ENCODE measurements at regions of chr19 and their contacts with region 1.

Region 1: GRCh38 chr19:39996811-39997594 is at the start of gene ZNF546:
- DNase-seq: peak; percentile 70 to 97
- H3K4me3 ChIP-seq: peak within 1 kb of the TSS; percentile 69 to 72
- H3K27ac ChIP-seq: peak within 1 kb of the TSS; percentile 91 to 92
- H3K4me1 ChIP-seq: peaks cover 0 to 10% of the 10 kb centered on the region in 2 donors
- H3K27me3 ChIP-seq: no peaks in the 10 kb centered on the region
- CTCF ChIP-seq: no peak
- total RNA-seq, gene ZNF546: 3.0 TPM

Region 2: DNA sequence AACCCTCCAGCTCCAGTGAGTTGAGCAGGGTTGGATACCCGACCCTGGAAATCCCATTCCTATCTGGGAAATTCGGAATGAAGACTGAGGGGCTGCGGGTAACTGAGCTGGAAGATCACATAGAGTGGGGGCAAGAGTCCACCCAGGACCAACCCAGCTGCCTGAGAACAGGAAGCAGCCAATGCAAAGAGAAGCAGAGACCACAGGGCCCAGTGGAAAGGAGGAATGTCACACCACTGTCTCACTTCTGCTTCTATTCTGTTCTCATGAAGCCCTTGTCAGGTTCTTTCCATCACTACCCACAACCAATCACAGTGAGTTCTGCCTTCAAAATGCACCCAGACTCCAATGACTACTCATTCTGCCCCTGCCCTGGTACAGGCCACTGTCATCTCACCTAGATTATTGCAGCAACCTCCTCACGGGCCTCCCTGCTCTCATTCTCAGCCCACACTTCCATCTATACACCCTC is 178.3 kb before region 1 on chr19:
- intact Hi-C with region 1: no loop called
- DNase-seq: no peak
- H3K4me3 ChIP-seq: no peak overlapping the region
- H3K27ac ChIP-seq: no peak overlapping the region
- H3K4me1 ChIP-seq: no peaks in the 10 kb centered on the region
- H3K27me3 ChIP-seq: no peaks in the 10 kb centered on the region
- CTCF ChIP-seq: no peak

Region 3: GRCh38 chr19:39833464-39834286 is 163.3 kb before region 1 on chr19 and contains the start of gene DYRK1B:
- intact Hi-C with region 1: loop called (anchors 2 kb)
- DNase-seq: peak; percentile 91 to 99
- H3K4me3 ChIP-seq: peak within 1 kb of the TSS; percentile 75 to 99
- H3K27ac ChIP-seq: peak within 1 kb of the TSS; percentile 77 to 93
- H3K4me1 ChIP-seq: peaks cover 0 to 17% of the 10 kb centered on the region in 2 donors
- H3K27me3 ChIP-seq: no peaks in the 10 kb centered on the region
- CTCF ChIP-seq: no peak
- total RNA-seq, gene DYRK1B: 34.7 TPM

Region 4: DNA sequence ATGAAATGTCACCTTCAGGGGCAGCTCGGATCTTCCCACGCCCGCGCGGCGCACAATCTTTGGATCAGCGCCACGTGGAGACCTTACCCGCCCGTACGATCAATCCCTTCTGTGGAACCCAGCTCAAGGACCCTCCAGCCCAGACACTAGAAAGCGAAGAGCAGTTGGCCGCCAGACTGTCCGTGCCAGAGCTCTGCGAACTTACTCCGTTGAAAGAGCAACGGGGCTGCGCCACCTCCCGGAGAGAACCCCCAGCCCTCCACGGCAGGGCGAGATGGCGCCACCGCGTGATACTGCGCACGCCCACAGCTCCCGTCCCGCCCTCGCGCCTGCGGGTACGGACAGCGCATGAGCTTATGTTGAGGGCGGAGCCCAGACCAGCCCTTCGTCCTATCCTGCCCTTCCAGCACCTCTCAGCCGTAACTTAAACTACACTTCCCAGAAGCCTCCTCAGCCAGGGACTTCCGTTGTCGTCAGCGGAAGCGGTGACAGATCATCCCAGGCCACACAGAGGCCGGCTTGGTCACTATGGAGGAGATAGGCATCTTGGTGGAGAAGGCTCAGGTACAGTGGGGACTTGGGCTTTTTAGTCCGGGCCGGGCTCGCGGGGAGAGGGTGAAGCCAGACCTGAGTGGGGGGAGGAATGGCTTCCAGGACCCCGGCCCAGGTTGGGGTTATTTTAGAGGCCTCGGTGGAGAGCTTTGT is 26.2 kb before region 1 on chr19 and contains the start of gene PSMC4:
- intact Hi-C with region 1: loop called (anchors 1 kb)
- DNase-seq: peak; percentile 95 to 99
- H3K4me3 ChIP-seq: peak within 1 kb of the TSS; percentile 75 to 76
- H3K27ac ChIP-seq: peak within 1 kb of the TSS; percentile 86 to 90
- H3K4me1 ChIP-seq: peaks cover 0 to 14% of the 10 kb centered on the region in 2 donors
- H3K27me3 ChIP-seq: no peaks in the 10 kb centered on the region
- CTCF ChIP-seq: peak; percentile 66 to 78 (median 75)
- total RNA-seq, gene PSMC4: 122 TPM

Region 5: GRCh38 chr19:39983695-39984305 is 13.2 kb before region 1 on chr19:
- intact Hi-C with region 1: no loop called
- DNase-seq: no peak
- H3K4me3 ChIP-seq: no peak overlapping the region
- H3K27ac ChIP-seq: no peak overlapping the region
- H3K4me1 ChIP-seq: peaks cover 0 to under 1% of the 10 kb centered on the region in 2 donors
- H3K27me3 ChIP-seq: no peaks in the 10 kb centered on the region
- CTCF ChIP-seq: no peak

Region 6: DNA sequence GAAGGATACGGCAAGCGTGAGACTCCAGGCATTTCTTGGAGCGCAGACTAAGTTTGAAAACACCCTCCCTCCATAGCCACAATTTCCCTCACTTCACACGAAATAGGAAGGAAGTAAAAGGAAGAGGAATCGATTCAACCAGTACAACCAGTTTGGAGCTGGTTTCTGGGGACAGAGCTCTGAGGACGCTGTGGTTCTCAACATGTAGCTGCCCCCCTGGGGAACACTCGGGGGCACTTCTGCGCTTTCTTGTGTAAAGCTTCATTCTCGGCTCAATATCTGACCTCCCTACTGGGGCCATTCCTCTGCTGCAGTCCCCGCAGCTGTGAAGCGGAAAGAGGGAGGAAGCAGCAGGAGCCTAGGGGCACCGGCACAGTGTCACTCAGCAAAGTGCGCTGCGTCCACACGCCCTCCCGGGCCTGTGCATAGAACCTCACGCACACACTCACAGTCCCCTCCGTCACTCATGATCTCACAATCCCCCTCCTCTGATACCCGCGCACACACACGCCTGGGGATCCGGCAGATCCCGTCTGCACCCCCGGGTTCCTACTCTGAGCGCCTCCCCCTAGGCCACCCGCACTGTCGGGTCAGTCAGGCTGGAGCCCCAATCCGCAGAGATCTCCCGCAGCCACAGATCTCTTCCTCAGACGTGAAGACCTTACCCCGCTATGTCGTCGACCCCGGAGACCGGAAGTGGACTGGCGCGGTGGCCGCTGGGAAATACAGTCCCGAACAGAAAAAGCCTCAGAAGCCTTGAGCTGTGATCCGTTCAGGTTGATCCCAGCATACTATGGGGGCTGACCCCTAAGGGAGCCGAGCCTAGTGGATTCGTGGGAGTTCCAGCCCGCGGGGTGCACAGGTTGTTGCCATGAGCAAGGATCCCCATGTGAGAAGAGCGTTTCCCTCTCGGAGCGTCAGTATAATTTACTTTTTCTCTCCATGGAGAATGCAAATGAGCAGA is 93.5 kb after region 1 on chr19 and contains the start of gene ZNF780A:
- intact Hi-C with region 1: loop called (anchors 5 kb)
- DNase-seq: peak in 1 of 2 donors; percentile 83
- H3K4me3 ChIP-seq: peak within 1 kb of the TSS; percentile 78 to 90
- H3K27ac ChIP-seq: peak within 1 kb of the TSS; percentile 90 to 94
- H3K4me1 ChIP-seq: peaks cover 0 to 5% of the 10 kb centered on the region in 2 donors
- H3K27me3 ChIP-seq: no peaks in the 10 kb centered on the region
- CTCF ChIP-seq: no peak
- total RNA-seq, gene ZNF780A: 0.32 TPM

Region 7: GRCh38 chr19:40147693-40148347 is 150.8 kb after region 1 on chr19:
- intact Hi-C with region 1: no loop called
- DNase-seq: peak in 1 of 2 donors; percentile 71
- H3K4me3 ChIP-seq: peak overlapping the region in 1 of 2 donors; percentile 16
- H3K27ac ChIP-seq: no peak overlapping the region
- H3K4me1 ChIP-seq: peaks cover 0 to 13% of the 10 kb centered on the region in 2 donors
- H3K27me3 ChIP-seq: no peaks in the 10 kb centered on the region
- CTCF ChIP-seq: no peak

Region 8: GRCh38 chr19:40190891-40191835 is 194.2 kb after region 1 on chr19 and contains the start of gene MAP3K10:
- intact Hi-C with region 1: loop called (anchors 5 kb)
- DNase-seq: peak in 1 of 2 donors; percentile 86
- H3K4me3 ChIP-seq: peak within 1 kb of the TSS; percentile 75 to 99
- H3K27ac ChIP-seq: peak within 1 kb of the TSS; percentile 92 to 99
- H3K4me1 ChIP-seq: peaks cover 9 to 22% of the 10 kb centered on the region in 2 donors
- H3K27me3 ChIP-seq: no peaks in the 10 kb centered on the region
- CTCF ChIP-seq: no peak
- total RNA-seq, gene MAP3K10: 19.4 TPM